Activated B cell treated with CpG ODN at 0.5 μM for 24 hours (primary cell): ENCODE measurements at regions of chr18 and their contacts with region 1.

Region 1: DNA sequence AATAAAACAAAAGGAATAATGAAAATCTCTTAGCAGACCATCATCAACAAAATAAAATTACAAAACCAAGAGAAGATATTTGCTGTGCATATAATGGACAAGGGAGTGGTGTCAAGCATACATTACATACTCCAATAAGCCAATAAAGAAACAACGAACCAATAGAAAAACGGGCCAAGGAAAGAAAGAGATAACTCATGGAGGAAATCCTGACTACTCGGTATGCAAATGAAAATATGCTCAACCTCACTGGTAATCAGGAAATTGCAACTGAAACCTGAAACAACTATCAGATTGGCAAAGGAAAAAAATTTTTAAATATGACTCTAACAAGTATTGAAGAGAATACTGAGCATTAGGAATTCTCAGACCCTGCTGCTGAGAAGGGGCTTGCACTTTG is 84.7 kb downstream of the BCL2 start:
- DNase-seq: no peak
- ATAC-seq: no peak
- H3K4me3 Mint-ChIP-seq: peak overlapping the region; percentile 42
- H3K27ac Mint-ChIP-seq: peak overlapping the region; percentile 38
- H3K4me1 Mint-ChIP-seq: peaks cover 59% of the 10 kb centered on the region
- H3K27me3 Mint-ChIP-seq: no peaks in the 10 kb centered on the region
- CTCF ChIP-seq: no peak

Region 2: DNA sequence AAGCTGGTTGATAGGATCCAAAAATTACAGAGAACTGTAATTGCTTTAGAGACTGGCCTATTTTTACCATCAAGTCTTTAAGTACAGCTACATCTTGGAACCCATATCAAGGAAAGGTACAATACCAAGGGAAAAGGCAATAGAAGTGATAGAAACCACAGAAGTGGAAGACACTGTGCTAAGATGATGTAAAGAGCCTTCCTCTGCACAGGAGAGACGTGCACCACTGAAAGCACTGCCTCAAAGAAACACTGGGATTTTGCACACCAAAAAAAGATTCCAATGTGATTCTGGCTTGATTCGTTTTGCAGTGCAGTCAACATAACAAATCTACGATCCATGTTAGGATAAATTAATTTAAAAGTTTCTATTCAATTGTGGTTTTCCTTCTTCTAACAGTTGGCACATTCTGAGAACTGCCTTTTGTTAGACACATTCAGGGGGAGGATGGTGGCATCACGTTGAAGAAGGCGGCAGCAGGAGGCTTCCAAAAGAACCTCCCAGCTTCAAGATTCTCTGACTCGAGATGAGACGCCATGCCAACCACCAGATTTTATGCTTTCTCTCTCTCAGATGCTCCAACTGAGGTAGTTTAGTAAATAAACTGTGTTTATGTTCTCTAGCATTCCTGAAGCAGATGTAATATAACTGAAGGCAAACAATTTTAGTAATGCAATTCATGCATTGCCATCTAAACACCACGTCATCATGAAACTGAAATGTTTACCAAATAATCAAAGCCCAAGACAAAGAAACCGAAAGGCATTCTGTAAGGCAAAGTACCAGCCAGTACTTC is 18.1 kb before region 1 on chr18:
- CTCF ChIA-PET with region 1: no interaction called
- POLR2A ChIA-PET with region 1: no interaction called
- intact Hi-C with region 1: loop called (anchors 2 kb)
- DNase-seq: no peak
- ATAC-seq: no peak
- H3K4me3 Mint-ChIP-seq: no peak overlapping the region
- H3K27ac Mint-ChIP-seq: peak overlapping the region; percentile 52
- H3K4me1 Mint-ChIP-seq: peaks cover 70% of the 10 kb centered on the region
- H3K27me3 Mint-ChIP-seq: no peaks in the 10 kb centered on the region
- CTCF ChIP-seq: no peak